Left cardiac atrium (tissue), 4 donors: ENCODE measurements at regions of chr16 and their contacts with region 1.

Region 1: GRCh38 chr16:2905431-2906387 is 6.0 kb upstream of the FLYWCH1 start:
- DNase-seq: peak; percentile 99
- ATAC-seq: peak; percentile 86 to 91

Region 2: GRCh38 chr16:2883027-2883851 is 22.5 kb before region 1 on chr16 and contains the start of gene FLYWCH2:
- intact Hi-C with region 1: loop called in 1 of 2 experiments (anchors 2 kb)
- DNase-seq: peak; percentile 97
- ATAC-seq: peak; percentile 87 to 93
- total RNA-seq, gene FLYWCH2: 27.1 to 29.1 TPM